ENCODE measurements at regions of chr3 and their contacts with region 1.

Region 1: DNA sequence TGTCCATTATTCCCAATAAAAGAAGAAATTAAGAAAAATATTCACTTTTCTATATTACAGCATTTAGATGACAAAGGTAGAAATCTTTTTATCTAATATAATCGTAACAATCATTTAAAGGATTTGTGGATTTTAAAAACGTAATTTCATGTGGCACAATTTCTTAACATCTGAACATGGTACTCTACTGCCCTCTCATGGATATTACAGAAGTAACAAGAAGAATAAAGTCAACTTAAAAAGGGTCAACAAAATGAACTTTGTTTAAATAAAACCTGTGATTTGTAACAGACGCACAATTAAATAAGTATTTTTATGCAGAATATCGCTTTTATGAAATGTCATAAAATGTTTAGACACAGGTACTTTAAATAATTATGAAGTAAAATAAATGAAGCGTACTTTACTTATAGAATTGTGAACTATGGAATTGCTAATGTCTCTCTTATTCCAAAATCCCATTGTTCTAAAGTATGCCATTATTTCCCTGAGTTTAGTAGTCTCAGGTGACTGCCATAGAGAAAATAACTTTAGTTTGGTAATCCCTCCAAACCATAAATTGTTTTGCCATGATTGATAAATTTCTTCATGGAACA is 366.8 kb upstream of the ZNF385D start:
- DNase-seq: no peak
- ATAC-seq: no peak
- H3K4me3 ChIP-seq: no peak overlapping the region
- H3K27ac ChIP-seq: no peak overlapping the region
- H3K4me1 ChIP-seq: no peaks in the 10 kb centered on the region
- H3K27me3 ChIP-seq: no peaks in the 10 kb centered on the region
- CTCF ChIP-seq: peak; percentile 52 to 80 (median 66)
- POLR2A ChIP-seq: no peak

Region 2: DNA sequence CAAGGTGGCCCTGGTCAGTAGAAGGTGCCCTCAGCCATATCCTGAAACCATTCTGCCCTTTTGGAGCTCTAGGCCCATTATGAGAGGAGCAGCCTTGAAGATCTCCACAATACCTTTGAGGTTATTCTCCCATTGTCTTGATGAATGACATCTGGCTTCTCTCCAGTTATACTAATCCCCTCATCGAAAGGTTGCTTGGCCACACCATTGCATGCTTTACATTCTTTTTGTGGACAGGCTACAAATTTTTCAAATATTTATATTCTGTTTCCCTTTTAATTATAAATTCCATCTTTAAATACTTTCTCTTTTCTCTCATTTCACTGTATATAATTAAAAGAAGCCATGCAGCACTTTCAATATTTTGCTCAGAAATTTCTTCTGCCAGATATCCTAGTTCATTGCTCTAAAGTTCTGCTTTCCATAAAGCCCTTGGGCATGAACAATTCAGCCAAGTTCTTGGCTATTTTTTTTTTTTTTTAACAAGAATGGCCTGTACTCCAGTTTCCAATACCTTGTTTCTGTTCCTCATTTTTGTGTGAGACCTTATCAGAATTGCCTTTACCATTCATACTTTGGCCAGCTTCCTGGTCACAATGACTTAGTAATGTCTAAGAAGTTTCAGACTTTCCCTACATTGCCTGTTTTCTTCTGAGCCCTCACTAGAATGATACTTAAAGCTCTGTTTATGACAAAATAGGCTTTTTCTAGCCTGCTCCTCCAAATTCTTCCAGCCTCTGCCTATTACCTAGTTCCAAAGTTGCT is 1793.0 kb before region 1 on chr3:
- intact Hi-C with region 1: loop called in 1 of 10 experiments (anchors 10 kb)
- DNase-seq: no peak
- ATAC-seq: no peak
- H3K4me3 ChIP-seq: no peak overlapping the region
- H3K27ac ChIP-seq: no peak overlapping the region
- H3K4me1 ChIP-seq: peaks cover 0 to 16% (median 0%) of the 10 kb centered on the region in 12 donors
- H3K27me3 ChIP-seq: no peaks in the 10 kb centered on the region
- CTCF ChIP-seq: no peak
- POLR2A ChIP-seq: no peak

Region 3: DNA sequence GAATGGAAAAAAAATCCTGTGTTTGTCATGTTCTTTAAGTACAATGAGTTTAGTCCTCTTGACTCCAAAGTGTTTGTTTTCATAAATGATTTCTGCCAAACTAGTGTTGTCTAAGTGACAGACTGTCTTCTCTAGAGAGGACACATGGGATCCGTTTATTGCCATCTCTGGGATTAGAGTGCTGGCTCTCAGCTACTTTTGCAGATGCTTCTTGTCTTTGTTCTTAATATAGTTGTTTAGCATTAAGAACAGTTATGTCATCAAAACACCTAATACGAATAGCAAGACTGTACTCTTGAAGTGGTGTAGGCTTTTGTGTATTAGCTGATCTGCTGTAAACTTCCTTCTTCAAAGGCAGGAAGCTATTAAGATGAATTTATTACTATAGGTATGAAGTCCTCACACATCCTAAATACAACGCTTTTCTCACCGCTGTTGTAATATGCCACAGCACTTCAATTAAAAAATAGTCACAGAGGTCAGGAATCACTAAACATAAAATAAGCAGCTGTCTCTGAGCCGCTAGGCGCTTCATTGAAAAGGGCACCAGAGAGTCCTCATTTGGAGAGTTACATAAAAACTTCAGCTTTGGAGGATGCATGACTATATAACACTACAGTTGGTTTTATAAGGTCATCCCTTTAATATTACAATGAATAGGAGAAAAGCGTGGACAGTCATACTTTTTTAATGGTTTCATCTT is 238.5 kb before region 1 on chr3:
- intact Hi-C with region 1: no loop called
- DNase-seq: no peak
- ATAC-seq: no peak
- H3K4me3 ChIP-seq: no peak overlapping the region
- H3K27ac ChIP-seq: no peak overlapping the region
- H3K4me1 ChIP-seq: no peaks in the 10 kb centered on the region
- H3K27me3 ChIP-seq: no peaks in the 10 kb centered on the region
- CTCF ChIP-seq: no peak
- POLR2A ChIP-seq: no peak

Region 4: DNA sequence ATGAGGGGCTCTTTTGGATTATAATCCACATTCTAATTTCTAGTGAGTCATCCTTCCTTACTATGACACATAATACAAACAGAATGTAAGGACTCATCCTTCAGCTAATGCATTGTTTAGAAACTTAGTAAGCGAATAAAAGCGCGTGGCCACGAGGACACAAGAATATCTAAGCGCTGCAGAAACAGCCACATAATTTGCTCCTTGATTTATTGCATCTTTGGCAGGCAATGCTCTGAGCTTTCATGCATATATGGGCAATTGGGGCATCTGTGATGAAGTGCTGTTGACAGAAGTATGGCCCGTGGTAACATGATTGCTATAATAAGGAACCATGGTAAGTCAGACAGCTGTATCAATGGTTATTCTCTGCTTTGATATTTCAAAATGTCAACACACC is 175.5 kb before region 1 on chr3:
- intact Hi-C with region 1: no loop called
- DNase-seq: peak in 4 of 5 donors; percentile 21 to 56 (median 24)
- ATAC-seq: peak; percentile 59 to 96 (median 83)
- H3K4me3 ChIP-seq: peak overlapping the region in 1 of 12 donors; percentile 47
- H3K27ac ChIP-seq: peak overlapping the region in 3 of 12 donors; percentile 4 to 69 (median 41)
- H3K4me1 ChIP-seq: no peaks in the 10 kb centered on the region
- H3K27me3 ChIP-seq: no peaks in the 10 kb centered on the region
- CTCF ChIP-seq: no peak
- POLR2A ChIP-seq: no peak